ENCODE measurements at regions of chr10 and their contacts with region 1.

Region 1: GRCh38 chr10:108544494-108545120 is 1378.7 kb downstream of the XPNPEP1 start:
- DNase-seq: peak; percentile 66 to 81
- H3K4me3 ChIP-seq: no peak overlapping the region
- H3K4me3 Mint-ChIP-seq: no peak overlapping the region
- H3K27ac Mint-ChIP-seq: no peak overlapping the region
- H3K4me1 ChIP-seq: no peaks in the 10 kb centered on the region
- H3K4me1 Mint-ChIP-seq: no peaks in the 10 kb centered on the region
- H3K27me3 ChIP-seq: no peaks in the 10 kb centered on the region
- H3K27me3 Mint-ChIP-seq: no peaks in the 10 kb centered on the region
- CTCF ChIP-seq: peak; percentile 93 to 97

Region 2: DNA sequence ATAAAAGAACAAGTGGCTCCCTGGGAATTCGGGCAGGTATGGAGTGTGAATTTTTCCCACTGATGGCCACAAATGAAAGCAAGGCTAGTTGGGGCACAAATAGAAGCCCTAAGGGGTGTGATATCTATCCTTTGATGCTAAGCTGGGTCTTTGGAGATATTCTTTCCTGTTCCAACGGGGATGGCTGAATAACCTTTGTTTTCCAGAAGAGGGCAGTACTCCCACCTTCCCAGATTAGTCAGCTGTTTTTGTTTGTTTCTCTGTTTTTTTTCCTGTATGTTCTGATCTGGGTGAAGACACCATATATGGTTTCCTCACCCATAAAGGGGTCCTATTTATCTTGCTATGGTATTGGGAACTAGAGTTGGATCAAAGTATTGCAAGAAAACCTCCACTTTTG is 432.4 kb before region 1 on chr10:
- CTCF ChIA-PET with region 1: no interaction called
- POLR2A ChIA-PET with region 1: no interaction called
- intact Hi-C with region 1: loop called (anchors 2 kb)
- DNase-seq: no peak
- H3K4me3 ChIP-seq: no peak overlapping the region
- H3K4me3 Mint-ChIP-seq: no peak overlapping the region
- H3K27ac Mint-ChIP-seq: no peak overlapping the region
- H3K4me1 ChIP-seq: no peaks in the 10 kb centered on the region
- H3K4me1 Mint-ChIP-seq: no peaks in the 10 kb centered on the region
- H3K27me3 ChIP-seq: no peaks in the 10 kb centered on the region
- H3K27me3 Mint-ChIP-seq: no peaks in the 10 kb centered on the region
- CTCF ChIP-seq: no peak

Region 3: DNA sequence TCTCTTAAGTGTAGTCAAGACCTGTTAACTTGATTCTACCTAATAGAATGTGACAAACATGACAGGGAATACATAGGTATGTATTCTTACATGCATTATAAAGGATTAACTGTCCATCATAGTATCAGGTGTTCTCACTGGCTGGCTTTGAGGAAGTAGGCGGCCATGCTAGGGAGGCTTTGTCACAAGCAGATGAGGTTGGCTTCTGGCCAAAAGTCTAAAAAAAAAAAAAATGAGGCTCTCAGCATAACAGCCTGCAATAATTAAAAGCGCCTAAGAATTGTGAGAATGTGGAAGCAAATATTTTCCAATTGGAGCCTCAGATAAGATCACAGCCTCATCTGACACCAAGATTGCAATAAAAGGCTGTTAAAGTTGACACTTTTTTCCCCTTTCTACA is 123.3 kb before region 1 on chr10:
- CTCF ChIA-PET with region 1: no interaction called
- POLR2A ChIA-PET with region 1: no interaction called
- intact Hi-C with region 1: no loop called
- DNase-seq: no peak
- H3K4me3 ChIP-seq: no peak overlapping the region
- H3K4me3 Mint-ChIP-seq: no peak overlapping the region
- H3K27ac Mint-ChIP-seq: no peak overlapping the region
- H3K4me1 ChIP-seq: no peaks in the 10 kb centered on the region
- H3K4me1 Mint-ChIP-seq: no peaks in the 10 kb centered on the region
- H3K27me3 ChIP-seq: no peaks in the 10 kb centered on the region
- H3K27me3 Mint-ChIP-seq: peaks cover 5% of the 10 kb centered on the region
- CTCF ChIP-seq: no peak

Region 4: GRCh38 chr10:108597031-108597430 is 52.4 kb after region 1 on chr10:
- CTCF ChIA-PET with region 1: no interaction called
- POLR2A ChIA-PET with region 1: no interaction called
- intact Hi-C with region 1: loop called (anchors 1 kb)
- DNase-seq: no peak
- H3K4me3 ChIP-seq: no peak overlapping the region
- H3K4me3 Mint-ChIP-seq: no peak overlapping the region
- H3K27ac Mint-ChIP-seq: peak overlapping the region; percentile 77
- H3K4me1 ChIP-seq: peaks cover 47% of the 10 kb centered on the region
- H3K4me1 Mint-ChIP-seq: peaks cover 34% of the 10 kb centered on the region
- H3K27me3 ChIP-seq: no peaks in the 10 kb centered on the region
- H3K27me3 Mint-ChIP-seq: no peaks in the 10 kb centered on the region
- CTCF ChIP-seq: no peak

Region 5: DNA sequence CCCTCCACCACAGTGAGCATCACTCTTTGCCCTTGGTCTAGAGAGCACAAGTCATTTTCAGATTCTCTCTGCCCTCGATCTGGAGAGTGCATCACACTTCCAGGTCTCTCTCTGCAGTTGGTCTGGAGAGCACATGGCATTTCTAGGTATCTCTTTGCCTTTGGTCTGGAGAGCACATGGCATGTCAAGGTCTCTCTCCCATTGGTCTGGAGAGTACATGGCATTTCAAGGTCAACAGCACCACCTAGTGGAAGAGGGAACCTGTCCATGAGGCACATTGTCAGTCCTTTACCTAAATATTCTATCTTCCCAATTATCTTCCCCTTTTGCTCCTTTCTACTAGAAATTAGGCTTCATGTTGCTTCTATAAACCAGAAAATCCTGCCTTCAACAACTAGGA is 239.3 kb after region 1 on chr10:
- CTCF ChIA-PET with region 1: no interaction called
- POLR2A ChIA-PET with region 1: no interaction called
- intact Hi-C with region 1: loop called (anchors 2 kb)
- DNase-seq: peak; percentile 49 to 71
- H3K4me3 ChIP-seq: no peak overlapping the region
- H3K4me3 Mint-ChIP-seq: no peak overlapping the region
- H3K27ac Mint-ChIP-seq: no peak overlapping the region
- H3K4me1 ChIP-seq: no peaks in the 10 kb centered on the region
- H3K4me1 Mint-ChIP-seq: no peaks in the 10 kb centered on the region
- H3K27me3 ChIP-seq: no peaks in the 10 kb centered on the region
- H3K27me3 Mint-ChIP-seq: no peaks in the 10 kb centered on the region
- CTCF ChIP-seq: peak; percentile 42 to 59

Region 6: DNA sequence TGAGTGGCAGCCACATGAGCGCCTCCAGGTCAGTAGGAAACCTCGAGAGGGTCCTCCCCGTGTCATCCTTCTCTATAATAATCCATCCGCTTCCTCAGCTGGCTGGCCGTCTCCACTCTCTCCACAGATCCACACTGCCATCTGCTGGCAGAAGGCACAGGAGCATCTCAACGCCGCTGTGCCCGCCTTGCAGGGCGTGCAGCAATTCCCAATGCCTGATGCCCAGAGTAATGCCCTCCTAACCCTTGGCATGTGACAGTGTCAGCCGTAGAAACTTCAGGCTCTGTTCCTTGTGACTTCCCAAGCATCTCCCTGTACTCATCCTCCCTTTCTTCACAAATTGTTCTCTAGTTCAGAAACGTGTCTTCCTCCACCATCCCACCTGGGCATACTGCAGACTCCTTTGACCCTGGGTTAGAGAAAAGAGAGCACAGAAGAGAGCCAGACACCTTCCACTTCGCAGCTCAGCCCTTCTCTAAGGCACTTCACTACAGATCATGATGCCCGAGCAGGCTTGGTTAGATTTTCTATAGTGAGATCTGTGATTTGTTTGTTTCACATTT is 1307.9 kb after region 1 on chr10:
- CTCF ChIA-PET with region 1: no interaction called
- POLR2A ChIA-PET with region 1: no interaction called
- intact Hi-C with region 1: loop called (anchors 10 kb)
- DNase-seq: peak; percentile 71 to 81
- H3K4me3 ChIP-seq: no peak overlapping the region
- H3K4me3 Mint-ChIP-seq: no peak overlapping the region
- H3K27ac Mint-ChIP-seq: no peak overlapping the region
- H3K4me1 ChIP-seq: no peaks in the 10 kb centered on the region; the same call in 1 of the 2 replicates
- H3K4me1 Mint-ChIP-seq: peaks cover 7% of the 10 kb centered on the region
- H3K27me3 ChIP-seq: no peaks in the 10 kb centered on the region
- H3K27me3 Mint-ChIP-seq: peaks cover 6% of the 10 kb centered on the region
- CTCF ChIP-seq: peak; percentile 89 to 95